Activated naive CD4-positive, alpha-beta T cell treated with anti-CD3 and anti-CD28 coated beads, Interleukin-2, amount 10 ng/mL, durations not matched to agents 7 days and 5 days (primary cell): ENCODE measurements at regions of chr10 and their contacts with region 1.

Region 1: GRCh38 chr10:6607778-6608177 is 27.7 kb upstream of the PRKCQ start:
- DNase-seq: no peak
- H3K4me3 Mint-ChIP-seq: no peak overlapping the region
- H3K27ac Mint-ChIP-seq: peak overlapping the region; percentile 93
- H3K4me1 Mint-ChIP-seq: peaks cover 90% of the 10 kb centered on the region
- H3K27me3 Mint-ChIP-seq: no peaks in the 10 kb centered on the region

Region 2: GRCh38 chr10:6593241-6593671 is 14.5 kb before region 1 on chr10:
- CTCF ChIA-PET with region 1: interaction called, 21 read pairs
- DNase-seq: peak; percentile 49
- H3K4me3 Mint-ChIP-seq: peak overlapping the region; percentile 54
- H3K27ac Mint-ChIP-seq: peak overlapping the region; percentile 98
- H3K4me1 Mint-ChIP-seq: peaks cover 96% of the 10 kb centered on the region
- H3K27me3 Mint-ChIP-seq: no peaks in the 10 kb centered on the region

Region 3: GRCh38 chr10:6621536-6621935 is 13.8 kb after region 1 on chr10:
- CTCF ChIA-PET with region 1: no interaction called
- DNase-seq: no peak
- H3K4me3 Mint-ChIP-seq: no peak overlapping the region
- H3K27ac Mint-ChIP-seq: no peak overlapping the region
- H3K4me1 Mint-ChIP-seq: peaks cover 32% of the 10 kb centered on the region
- H3K27me3 Mint-ChIP-seq: no peaks in the 10 kb centered on the region

Region 4: GRCh38 chr10:6654571-6654970 is 46.8 kb after region 1 on chr10:
- CTCF ChIA-PET with region 1: no interaction called
- DNase-seq: no peak
- H3K4me3 Mint-ChIP-seq: no peak overlapping the region
- H3K27ac Mint-ChIP-seq: no peak overlapping the region
- H3K4me1 Mint-ChIP-seq: peaks cover 17% of the 10 kb centered on the region
- H3K27me3 Mint-ChIP-seq: peaks cover 11% of the 10 kb centered on the region